ENCODE measurements at regions of chr6 and their contacts with region 1.

Region 1: GRCh38 chr6:106519460-106520394 is 109.6 kb downstream of the RTN4IP1 start:
- DNase-seq: peak; percentile 92
- H3K4me3 Mint-ChIP-seq: peak overlapping the region; percentile 80
- H3K27ac Mint-ChIP-seq: peak overlapping the region; percentile 97
- H3K4me1 Mint-ChIP-seq: peaks cover 59% of the 10 kb centered on the region
- H3K27me3 Mint-ChIP-seq: no peaks in the 10 kb centered on the region

Region 2: DNA sequence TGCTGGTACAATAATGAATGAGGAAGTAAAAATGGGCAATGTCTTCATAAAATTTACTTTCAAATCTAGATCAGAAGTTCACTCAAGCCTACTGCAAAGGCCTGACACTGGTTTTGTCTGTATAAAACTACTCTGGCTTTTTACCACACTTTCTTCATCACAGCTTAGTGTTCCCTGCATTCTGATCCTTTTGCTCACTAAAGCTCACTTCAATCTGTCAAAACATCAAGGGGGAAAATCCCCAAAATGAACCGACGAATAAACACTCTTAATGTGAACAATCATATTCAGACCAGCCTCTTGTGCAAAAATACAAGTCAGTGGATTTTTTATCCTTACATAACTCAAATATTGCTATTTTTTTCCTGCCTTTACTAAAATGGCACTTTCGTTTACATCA is 335.1 kb before region 1 on chr6:
- intact Hi-C with region 1: loop called (anchors 5 kb)
- DNase-seq: peak; percentile 49
- H3K4me3 Mint-ChIP-seq: no peak overlapping the region
- H3K27ac Mint-ChIP-seq: no peak overlapping the region
- H3K4me1 Mint-ChIP-seq: peaks cover 47% of the 10 kb centered on the region
- H3K27me3 Mint-ChIP-seq: no peaks in the 10 kb centered on the region

Region 3: GRCh38 chr6:106534564-106534982 is 14.8 kb after region 1 on chr6:
- intact Hi-C with region 1: loop called (anchors 1 kb)
- DNase-seq: peak; percentile 77
- H3K4me3 Mint-ChIP-seq: peak overlapping the region; percentile 29
- H3K27ac Mint-ChIP-seq: peak overlapping the region; percentile 79
- H3K4me1 Mint-ChIP-seq: peaks cover 47% of the 10 kb centered on the region
- H3K27me3 Mint-ChIP-seq: no peaks in the 10 kb centered on the region

Region 4: DNA sequence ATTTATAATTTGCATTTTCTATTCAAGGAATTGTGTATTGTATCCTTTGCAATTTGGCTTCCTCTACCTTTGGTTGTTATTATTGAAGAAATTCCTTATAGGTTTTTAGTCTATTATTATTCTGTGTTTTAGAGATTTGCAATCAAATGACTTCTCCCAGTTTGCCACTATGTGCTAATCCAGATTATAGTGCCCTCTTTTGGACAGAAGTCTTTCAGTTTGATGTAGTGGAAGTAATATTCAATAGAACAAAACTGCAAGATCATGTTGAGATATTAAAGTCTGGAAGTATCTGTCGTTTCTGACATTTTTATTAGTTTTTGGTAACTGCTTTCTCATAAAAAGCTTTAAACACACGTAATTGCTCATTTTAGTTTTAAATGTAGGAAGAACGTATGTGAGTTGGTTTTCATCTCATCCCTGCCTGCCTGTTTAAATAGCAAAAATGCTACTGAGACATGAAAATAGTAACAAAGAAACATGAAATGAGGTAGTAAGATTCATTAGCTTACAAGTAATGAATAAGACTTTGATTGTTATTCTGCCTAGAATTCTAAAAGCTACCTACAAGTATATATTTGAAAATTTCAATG is 36.7 kb after region 1 on chr6:
- intact Hi-C with region 1: loop called (anchors 1 kb)
- DNase-seq: no peak
- H3K4me3 Mint-ChIP-seq: no peak overlapping the region
- H3K27ac Mint-ChIP-seq: no peak overlapping the region
- H3K4me1 Mint-ChIP-seq: peaks cover 24% of the 10 kb centered on the region
- H3K27me3 Mint-ChIP-seq: no peaks in the 10 kb centered on the region

Region 5: DNA sequence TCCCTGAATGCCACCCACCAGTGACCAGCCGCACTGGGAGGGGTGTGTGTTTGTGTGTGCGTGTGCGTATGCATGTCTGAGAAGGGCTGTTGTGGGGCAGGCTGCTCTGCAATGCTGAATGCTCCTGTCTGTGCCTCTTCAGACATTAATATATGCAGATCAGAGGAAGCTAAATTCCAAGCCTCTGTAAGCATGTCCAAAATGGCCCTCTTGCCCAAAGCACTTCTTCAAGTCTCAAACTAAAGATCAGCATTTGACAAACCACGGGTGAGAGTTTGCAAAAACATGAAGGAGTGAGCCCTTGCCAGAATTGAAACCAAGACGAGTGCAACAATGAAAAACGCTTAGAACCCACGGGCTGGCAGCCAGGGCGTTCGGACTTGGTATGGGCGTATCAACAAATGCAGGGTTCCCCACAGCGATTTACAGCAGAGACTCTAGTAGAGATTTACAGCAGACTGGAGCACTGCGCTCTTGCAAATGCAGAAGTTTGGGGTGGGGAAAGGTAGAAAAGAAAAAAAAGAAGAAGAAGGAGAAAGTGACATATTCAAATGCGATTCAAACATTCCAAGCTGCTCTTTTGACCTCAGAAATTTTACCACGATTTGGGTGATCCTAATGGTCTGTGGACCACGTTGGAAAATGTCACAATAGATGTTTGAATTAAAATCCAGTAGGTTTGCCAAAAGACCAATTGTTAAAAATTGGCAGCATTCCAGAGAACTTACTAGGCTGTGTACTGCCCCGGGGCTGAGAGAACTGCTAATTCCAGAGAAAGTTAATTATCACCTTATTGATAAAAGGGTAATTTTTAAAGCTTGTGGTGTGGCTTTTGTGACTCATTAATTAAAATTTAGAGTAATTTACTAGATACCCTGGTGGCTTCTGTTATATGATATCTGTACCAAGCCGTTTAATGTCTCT is 1300.9 kb after region 1 on chr6:
- intact Hi-C with region 1: loop called (anchors 2 kb)
- DNase-seq: peak; percentile 86
- H3K4me3 Mint-ChIP-seq: peak overlapping the region; percentile 80
- H3K27ac Mint-ChIP-seq: peak overlapping the region; percentile 95
- H3K4me1 Mint-ChIP-seq: peaks cover 82% of the 10 kb centered on the region
- H3K27me3 Mint-ChIP-seq: no peaks in the 10 kb centered on the region

Measured in activated CD4-positive, alpha-beta T cell treated with anti-CD3 and anti-CD28 coated beads, Interleukin-2, amount 10 ng/mL, durations not matched to agents 24 days and 14 days (primary cell).